ENCODE measurements at regions of chr10 and their contacts with region 1.

Region 1: DNA sequence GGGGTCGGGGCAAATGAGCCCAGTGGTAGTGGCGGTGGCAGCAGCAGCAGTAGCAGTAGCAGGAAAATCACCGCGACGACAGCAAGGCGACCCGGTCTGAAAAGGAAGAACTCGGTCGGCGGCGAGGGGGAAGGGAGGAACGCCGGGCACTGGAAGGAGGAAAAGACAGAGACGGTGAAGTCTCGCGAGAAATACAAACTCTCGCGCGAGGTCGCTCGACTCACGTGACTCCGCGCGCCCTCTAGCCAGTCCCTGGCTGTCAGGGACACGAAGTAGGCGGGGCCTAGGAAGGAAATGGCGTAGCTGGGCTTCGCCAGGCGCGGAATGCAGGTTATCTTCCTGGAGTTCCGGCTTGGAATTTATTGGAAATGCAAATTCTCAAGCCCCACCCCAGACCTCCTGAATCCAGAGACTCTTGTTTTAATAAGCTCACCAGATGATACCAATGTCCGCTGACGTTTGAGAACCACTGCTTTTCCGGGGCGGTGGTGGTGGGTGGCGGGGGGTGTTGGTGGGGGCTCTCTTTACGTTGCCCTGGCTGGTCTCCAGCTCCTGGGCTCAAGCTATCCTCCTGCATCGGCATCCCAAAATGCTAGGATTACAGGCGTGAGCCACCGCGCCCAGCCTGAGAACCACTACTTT is at the start of gene SMNDC1:
- DNase-seq: peak; percentile 94 to 98 (median 97)
- ATAC-seq: peak; percentile 88
- H3K4me3 ChIP-seq: peak within 1 kb of the TSS; percentile 72 to 85
- H3K4me3 Mint-ChIP-seq: peak within 1 kb of the TSS; percentile 98
- H3K27ac ChIP-seq: peak within 1 kb of the TSS; percentile 89 to 95
- H3K27ac Mint-ChIP-seq: peak within 1 kb of the TSS; percentile 100
- H3K4me1 ChIP-seq: peaks cover 45% of the 10 kb centered on the region
- H3K4me1 Mint-ChIP-seq: peaks cover 55% of the 10 kb centered on the region
- H3K27me3 ChIP-seq: no peaks in the 10 kb centered on the region
- H3K27me3 Mint-ChIP-seq: no peaks in the 10 kb centered on the region
- CTCF ChIP-seq: no peak
- total RNA-seq, gene SMNDC1: 43.3 to 44.8 TPM

Region 2: GRCh38 chr10:109866168-109866994 is 438.5 kb before region 1 on chr10:
- CTCF ChIA-PET with region 1: no interaction called
- POLR2A ChIA-PET with region 1: no interaction called
- intact Hi-C with region 1: no loop called
- DNase-seq: no peak
- ATAC-seq: no peak
- H3K4me3 ChIP-seq: no peak overlapping the region
- H3K4me3 Mint-ChIP-seq: no peak overlapping the region
- H3K27ac ChIP-seq: no peak overlapping the region
- H3K27ac Mint-ChIP-seq: no peak overlapping the region
- H3K4me1 ChIP-seq: no peaks in the 10 kb centered on the region
- H3K4me1 Mint-ChIP-seq: no peaks in the 10 kb centered on the region
- H3K27me3 ChIP-seq: no peaks in the 10 kb centered on the region
- H3K27me3 Mint-ChIP-seq: no peaks in the 10 kb centered on the region
- CTCF ChIP-seq: no peak

Region 3: GRCh38 chr10:110137142-110137545 is 167.8 kb before region 1 on chr10:
- CTCF ChIA-PET with region 1: interaction called, 5 read pairs
- POLR2A ChIA-PET with region 1: no interaction called
- intact Hi-C with region 1: loop called in 1 of 2 experiments (anchors 2 kb)
- DNase-seq: peak in 2 of 9 experiments; percentile 67 to 79
- ATAC-seq: peak; percentile 74
- H3K4me3 ChIP-seq: no peak overlapping the region
- H3K4me3 Mint-ChIP-seq: no peak overlapping the region
- H3K27ac ChIP-seq: peak overlapping the region in 1 of 2 experiments; percentile 2
- H3K27ac Mint-ChIP-seq: peak overlapping the region; percentile 23
- H3K4me1 ChIP-seq: peaks cover 9% of the 10 kb centered on the region
- H3K4me1 Mint-ChIP-seq: peaks cover 21% of the 10 kb centered on the region
- H3K27me3 ChIP-seq: no peaks in the 10 kb centered on the region
- H3K27me3 Mint-ChIP-seq: no peaks in the 10 kb centered on the region
- CTCF ChIP-seq: peak; percentile 97

Region 4: GRCh38 chr10:110237894-110238480 is 66.9 kb before region 1 on chr10:
- CTCF ChIA-PET with region 1: no interaction called
- POLR2A ChIA-PET with region 1: no interaction called
- intact Hi-C with region 1: no loop called
- DNase-seq: no peak
- ATAC-seq: no peak
- H3K4me3 ChIP-seq: no peak overlapping the region
- H3K4me3 Mint-ChIP-seq: no peak overlapping the region
- H3K27ac ChIP-seq: no peak overlapping the region
- H3K27ac Mint-ChIP-seq: no peak overlapping the region
- H3K4me1 ChIP-seq: no peaks in the 10 kb centered on the region
- H3K4me1 Mint-ChIP-seq: peaks cover 22% of the 10 kb centered on the region
- H3K27me3 ChIP-seq: no peaks in the 10 kb centered on the region
- H3K27me3 Mint-ChIP-seq: no peaks in the 10 kb centered on the region
- CTCF ChIP-seq: no peak

Region 5: DNA sequence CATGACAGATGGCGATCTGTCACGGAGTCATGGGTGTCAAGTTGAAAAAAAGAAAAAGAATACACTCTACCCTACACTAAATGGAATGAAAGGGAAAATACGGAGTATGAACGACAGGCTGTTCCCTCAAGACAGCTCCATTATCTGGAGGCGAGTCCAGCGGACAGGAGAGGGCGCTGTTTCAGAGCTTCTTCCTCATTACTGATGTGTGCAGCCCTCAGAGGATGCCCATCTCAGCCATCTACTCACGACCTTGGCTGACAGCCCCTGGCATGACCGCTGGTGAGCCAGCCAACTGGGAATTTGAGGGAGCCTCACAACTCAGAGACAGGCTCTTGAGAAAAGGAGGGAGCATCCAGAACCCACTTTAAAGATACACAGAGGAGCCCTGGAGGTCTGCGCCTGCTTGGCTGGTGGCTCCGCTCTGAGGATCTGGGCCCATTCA is 49.4 kb after region 1 on chr10:
- CTCF ChIA-PET with region 1: interaction called, 16 read pairs
- POLR2A ChIA-PET with region 1: no interaction called
- intact Hi-C with region 1: loop called (anchors 2 to 5 kb)
- DNase-seq: peak; percentile 54 to 84 (median 75)
- ATAC-seq: no peak
- H3K4me3 ChIP-seq: no peak overlapping the region
- H3K4me3 Mint-ChIP-seq: no peak overlapping the region
- H3K27ac ChIP-seq: no peak overlapping the region
- H3K27ac Mint-ChIP-seq: no peak overlapping the region
- H3K4me1 ChIP-seq: peaks cover 9% of the 10 kb centered on the region
- H3K4me1 Mint-ChIP-seq: peaks cover 48% of the 10 kb centered on the region
- H3K27me3 ChIP-seq: no peaks in the 10 kb centered on the region
- H3K27me3 Mint-ChIP-seq: no peaks in the 10 kb centered on the region
- CTCF ChIP-seq: peak; percentile 63

Region 6: GRCh38 chr10:110547139-110547761 is 242.3 kb after region 1 on chr10:
- CTCF ChIA-PET with region 1: interaction called, 139 read pairs
- POLR2A ChIA-PET with region 1: interaction called, 6 read pairs
- intact Hi-C with region 1: loop called (anchors 1 kb)
- DNase-seq: peak in 2 of 9 experiments; percentile 66 to 79
- ATAC-seq: peak; percentile 88
- H3K4me3 ChIP-seq: no peak overlapping the region
- H3K4me3 Mint-ChIP-seq: no peak overlapping the region
- H3K27ac ChIP-seq: no peak overlapping the region
- H3K27ac Mint-ChIP-seq: no peak overlapping the region
- H3K4me1 ChIP-seq: no peaks in the 10 kb centered on the region
- H3K4me1 Mint-ChIP-seq: peaks cover 4% of the 10 kb centered on the region
- H3K27me3 ChIP-seq: no peaks in the 10 kb centered on the region
- H3K27me3 Mint-ChIP-seq: peaks cover 16% of the 10 kb centered on the region
- CTCF ChIP-seq: peak; percentile 92

Region 7: DNA sequence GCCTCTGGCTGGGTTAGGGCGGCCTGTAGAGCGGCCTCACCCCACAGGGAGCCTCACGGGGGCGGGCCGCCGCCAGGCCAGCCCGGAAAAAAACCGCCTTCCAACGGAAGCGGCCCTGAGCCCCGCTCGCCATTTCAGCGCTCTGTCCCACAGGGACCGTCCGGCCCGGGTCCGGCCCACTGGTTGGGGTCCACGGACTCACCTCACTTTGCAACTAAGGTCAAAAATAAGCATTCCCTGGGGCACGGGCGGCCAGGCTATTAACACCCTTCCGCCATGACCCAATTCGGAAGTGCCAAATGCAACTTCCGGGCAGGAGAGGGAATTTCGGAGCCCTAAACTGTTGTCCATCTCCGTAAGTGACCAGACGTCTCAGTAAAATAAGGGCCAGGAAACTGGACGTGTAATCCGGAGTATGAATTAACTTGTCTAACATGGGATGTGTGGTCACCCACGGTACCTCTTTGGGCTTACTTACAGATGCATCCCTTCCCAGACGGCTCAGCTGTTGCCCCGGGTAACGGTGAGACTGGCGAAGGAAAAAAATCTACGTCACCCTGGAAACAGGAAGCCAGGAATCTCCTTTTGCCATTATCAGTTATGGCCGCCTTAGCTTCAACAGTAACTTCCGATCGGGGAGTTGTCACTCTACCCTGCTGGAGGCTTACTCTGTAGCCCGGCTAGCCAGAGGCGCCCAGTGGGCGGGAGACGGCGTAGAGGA is 613.9 kb after region 1 on chr10 and contains the start of gene BBIP1:
- CTCF ChIA-PET with region 1: no interaction called
- POLR2A ChIA-PET with region 1: interaction called, 3 read pairs
- intact Hi-C with region 1: loop called (anchors 2 kb)
- DNase-seq: peak in 5 of 9 experiments; percentile 95 to 100 (median 95)
- ATAC-seq: peak; percentile 93
- H3K4me3 ChIP-seq: peak within 1 kb of the TSS; percentile 92 to 100
- H3K4me3 Mint-ChIP-seq: peak within 1 kb of the TSS; percentile 98
- H3K27ac ChIP-seq: peak within 1 kb of the TSS; percentile 99 to 100
- H3K27ac Mint-ChIP-seq: peak within 1 kb of the TSS; percentile 99
- H3K4me1 ChIP-seq: peaks cover 16% of the 10 kb centered on the region
- H3K4me1 Mint-ChIP-seq: peaks cover 51% of the 10 kb centered on the region
- H3K27me3 ChIP-seq: no peaks in the 10 kb centered on the region
- H3K27me3 Mint-ChIP-seq: no peaks in the 10 kb centered on the region
- CTCF ChIP-seq: no peak
- total RNA-seq, gene BBIP1: 9.5 to 11.1 TPM

Measured in CD8-positive, alpha-beta T cell (primary cell).